Vagina (tissue), 2 donors: ENCODE measurements at regions of chr6 and their contacts with region 1.

Region 1: GRCh38 chr6:12233693-12234571 is 56.2 kb upstream of the EDN1 start:
- DNase-seq: no peak
- H3K4me3 ChIP-seq: no peak overlapping the region
- H3K27ac ChIP-seq: no peak overlapping the region
- H3K4me1 ChIP-seq: peaks cover 12% of the 10 kb centered on the region
- H3K27me3 ChIP-seq: no peaks in the 10 kb centered on the region
- CTCF ChIP-seq: peak; percentile 38 to 80 (median 75)
- POLR2A ChIP-seq: no peak

Region 2: DNA sequence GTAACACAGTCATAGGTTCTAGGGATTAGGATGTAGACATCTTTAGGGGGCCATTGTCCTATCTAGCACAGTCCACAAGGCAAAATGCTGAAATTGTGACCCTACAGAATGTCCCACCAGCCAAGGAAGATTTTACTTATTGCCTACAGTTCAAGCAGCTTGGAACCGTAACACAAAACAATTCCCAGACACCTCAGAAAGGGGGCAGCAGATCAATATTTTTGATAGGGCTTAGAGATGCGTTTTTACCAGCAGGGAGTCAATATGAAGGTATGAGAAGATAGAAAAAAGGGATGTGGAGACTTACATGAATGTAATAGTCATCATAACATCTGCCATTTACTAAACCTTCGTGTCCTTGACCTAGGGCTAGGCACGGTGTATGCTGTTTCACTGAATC is 615.4 kb before region 1 on chr6:
- intact Hi-C with region 1: no loop called
- DNase-seq: no peak
- H3K4me3 ChIP-seq: no peak overlapping the region
- H3K27ac ChIP-seq: no peak overlapping the region
- H3K4me1 ChIP-seq: no peaks in the 10 kb centered on the region
- H3K27me3 ChIP-seq: no peaks in the 10 kb centered on the region
- CTCF ChIP-seq: no peak
- POLR2A ChIP-seq: no peak

Region 3: DNA sequence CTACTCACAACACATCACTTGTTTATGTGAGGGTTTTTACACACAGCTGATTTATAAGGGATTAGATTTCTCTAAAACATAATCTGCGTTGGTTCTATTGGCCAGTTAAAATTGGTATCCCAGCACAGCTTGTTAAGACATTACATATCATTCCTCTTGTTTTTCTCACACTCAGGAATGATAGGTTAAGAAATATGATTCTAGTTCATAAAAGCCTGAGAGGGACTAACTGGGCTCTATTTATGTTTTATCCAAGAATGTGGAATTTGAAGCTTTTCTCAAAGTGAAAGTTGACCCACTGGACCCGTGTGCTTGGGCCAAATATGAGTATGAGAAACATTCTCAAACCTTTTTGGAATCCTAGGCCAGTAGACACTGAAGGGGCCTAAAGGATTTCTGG is 579.1 kb before region 1 on chr6:
- intact Hi-C with region 1: loop called (anchors 5 kb)
- DNase-seq: no peak
- H3K4me3 ChIP-seq: no peak overlapping the region
- H3K27ac ChIP-seq: no peak overlapping the region
- H3K4me1 ChIP-seq: peaks cover 17% of the 10 kb centered on the region
- H3K27me3 ChIP-seq: no peaks in the 10 kb centered on the region
- CTCF ChIP-seq: no peak
- POLR2A ChIP-seq: no peak

Region 4: DNA sequence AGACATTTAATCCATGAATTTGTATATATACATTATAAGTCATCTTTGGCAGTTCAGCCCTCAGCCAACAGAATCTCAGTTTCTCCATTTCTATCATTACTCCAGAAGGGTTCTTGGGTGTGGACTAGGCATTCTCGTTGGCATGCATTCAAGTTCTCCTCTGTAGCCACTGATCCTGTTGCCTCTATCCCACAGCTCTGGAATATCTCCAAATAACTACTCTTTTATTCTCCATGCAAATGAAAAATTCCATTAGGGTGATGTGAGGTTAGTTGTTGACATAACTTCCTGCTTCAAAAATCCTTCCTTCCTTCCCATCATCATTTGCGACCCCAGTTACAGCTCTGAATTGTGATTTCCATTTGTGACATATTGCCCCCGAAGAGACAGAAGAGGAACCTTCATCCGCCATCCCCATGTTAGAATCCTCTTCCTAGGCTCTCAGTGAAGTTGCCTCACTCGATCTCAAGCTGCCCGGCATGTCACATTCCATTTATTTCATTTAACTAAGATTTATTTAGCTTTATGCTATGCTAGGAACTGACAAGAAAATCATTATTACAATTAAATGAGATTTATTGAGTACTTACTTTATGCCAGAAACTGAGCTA is 37.5 kb before region 1 on chr6:
- intact Hi-C with region 1: no loop called
- DNase-seq: no peak
- H3K4me3 ChIP-seq: no peak overlapping the region
- H3K27ac ChIP-seq: no peak overlapping the region
- H3K4me1 ChIP-seq: no peaks in the 10 kb centered on the region
- H3K27me3 ChIP-seq: no peaks in the 10 kb centered on the region
- CTCF ChIP-seq: no peak
- POLR2A ChIP-seq: no peak